ENCODE measurements at regions of chr2 and their contacts with region 1.

Region 1: GRCh38 chr2:27771548-27772335 is at the start of gene MRPL33:
- DNase-seq: peak; percentile 88
- H3K4me3 ChIP-seq: peak within 1 kb of the TSS; percentile 76 to 93 (median 91)
- H3K27ac ChIP-seq: peak within 1 kb of the TSS; percentile 78
- H3K4me1 ChIP-seq: peaks cover 24% of the 10 kb centered on the region
- H3K27me3 ChIP-seq: no peaks in the 10 kb centered on the region
- CTCF ChIP-seq: no peak
- total RNA-seq, gene MRPL33: 40.2 to 83.6 TPM

Region 2: GRCh38 chr2:27723372-27724144 is 48.2 kb before region 1 on chr2:
- CTCF ChIA-PET with region 1: no interaction called
- dilution Hi-C with region 1: loop called (anchors 5 kb)
- in situ Hi-C with region 1: no loop called
- intact Hi-C with region 1: no loop called
- DNase-seq: peak; percentile 53
- H3K4me3 ChIP-seq: no peak overlapping the region
- H3K27ac ChIP-seq: no peak overlapping the region
- H3K4me1 ChIP-seq: peaks cover 32% of the 10 kb centered on the region
- H3K27me3 ChIP-seq: no peaks in the 10 kb centered on the region
- CTCF ChIP-seq: peak; percentile 78 to 89

Region 3: GRCh38 chr2:27798948-27799645 is 27.4 kb after region 1 on chr2:
- CTCF ChIA-PET with region 1: interaction called, 5 read pairs
- dilution Hi-C with region 1: no loop called
- in situ Hi-C with region 1: no loop called
- intact Hi-C with region 1: loop called (anchors 2 kb)
- DNase-seq: peak; percentile 100
- H3K4me3 ChIP-seq: no peak overlapping the region
- H3K27ac ChIP-seq: peak overlapping the region; percentile 94
- H3K4me1 ChIP-seq: peaks cover 30% of the 10 kb centered on the region
- H3K27me3 ChIP-seq: no peaks in the 10 kb centered on the region
- CTCF ChIP-seq: no peak

Region 4: GRCh38 chr2:27814758-27815157 is 43.0 kb after region 1 on chr2:
- CTCF ChIA-PET with region 1: no interaction called
- dilution Hi-C with region 1: no loop called
- in situ Hi-C with region 1: no loop called
- intact Hi-C with region 1: no loop called
- DNase-seq: no peak
- H3K4me3 ChIP-seq: no peak overlapping the region
- H3K27ac ChIP-seq: no peak overlapping the region
- H3K4me1 ChIP-seq: peaks cover 13% of the 10 kb centered on the region
- H3K27me3 ChIP-seq: no peaks in the 10 kb centered on the region
- CTCF ChIP-seq: no peak

Region 5: GRCh38 chr2:28045676-28046351 is 274.1 kb after region 1 on chr2:
- CTCF ChIA-PET with region 1: no interaction called
- dilution Hi-C with region 1: no loop called
- in situ Hi-C with region 1: no loop called
- intact Hi-C with region 1: no loop called
- DNase-seq: no peak
- H3K4me3 ChIP-seq: no peak overlapping the region
- H3K27ac ChIP-seq: no peak overlapping the region
- H3K4me1 ChIP-seq: peaks cover 10% of the 10 kb centered on the region
- H3K27me3 ChIP-seq: no peaks in the 10 kb centered on the region
- CTCF ChIP-seq: no peak

Measured in mammary epithelial cell (primary cell).